Endothelial cell of umbilical vein (primary cell): ENCODE measurements at regions of chr1 and their contacts with region 1.

Region 1: DNA sequence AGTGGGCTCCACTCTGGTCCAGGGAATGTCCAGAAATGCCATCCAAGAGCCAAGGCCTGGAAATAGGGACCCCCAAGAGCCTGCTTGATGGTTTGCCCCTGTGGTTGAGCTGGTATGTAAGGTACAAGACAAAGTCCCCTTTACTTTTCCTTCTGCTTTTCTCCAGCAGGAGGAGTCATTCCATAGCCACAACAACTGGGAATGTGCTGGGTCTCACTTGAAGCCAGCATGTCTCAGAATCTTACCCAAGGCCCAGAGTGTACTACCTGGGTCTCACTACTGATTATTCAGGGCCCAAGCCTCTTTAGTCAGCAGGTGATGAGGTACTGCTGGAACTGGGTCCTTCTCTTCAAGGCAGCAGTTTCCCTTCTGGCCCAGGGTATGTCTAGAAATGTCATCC is 62.1 kb upstream of the CD55 start:
- DNase-seq: peak; percentile 78
- H3K4me3 ChIP-seq: no peak overlapping the region
- H3K27ac ChIP-seq: no peak overlapping the region
- H3K4me1 ChIP-seq: no peaks in the 10 kb centered on the region
- H3K27me3 ChIP-seq: no peaks in the 10 kb centered on the region
- CTCF ChIP-seq: peak; percentile 46 to 67
- POLR2A ChIP-seq: no peak

Region 2: GRCh38 chr1:207084701-207085180 is 174.7 kb before region 1 on chr1:
- CTCF ChIA-PET with region 1: interaction called, 13 read pairs
- POLR2A ChIA-PET with region 1: no interaction called
- dilution Hi-C with region 1: no loop called
- intact Hi-C with region 1: loop called (anchors 1 kb)
- DNase-seq: peak; percentile 75
- H3K4me3 ChIP-seq: no peak overlapping the region
- H3K27ac ChIP-seq: no peak overlapping the region
- H3K4me1 ChIP-seq: no peaks in the 10 kb centered on the region
- H3K27me3 ChIP-seq: peaks cover 2 to 3% of the 10 kb centered on the region in 2 experiments
- CTCF ChIP-seq: peak; percentile 39 to 63
- POLR2A ChIP-seq: no peak

Region 3: DNA sequence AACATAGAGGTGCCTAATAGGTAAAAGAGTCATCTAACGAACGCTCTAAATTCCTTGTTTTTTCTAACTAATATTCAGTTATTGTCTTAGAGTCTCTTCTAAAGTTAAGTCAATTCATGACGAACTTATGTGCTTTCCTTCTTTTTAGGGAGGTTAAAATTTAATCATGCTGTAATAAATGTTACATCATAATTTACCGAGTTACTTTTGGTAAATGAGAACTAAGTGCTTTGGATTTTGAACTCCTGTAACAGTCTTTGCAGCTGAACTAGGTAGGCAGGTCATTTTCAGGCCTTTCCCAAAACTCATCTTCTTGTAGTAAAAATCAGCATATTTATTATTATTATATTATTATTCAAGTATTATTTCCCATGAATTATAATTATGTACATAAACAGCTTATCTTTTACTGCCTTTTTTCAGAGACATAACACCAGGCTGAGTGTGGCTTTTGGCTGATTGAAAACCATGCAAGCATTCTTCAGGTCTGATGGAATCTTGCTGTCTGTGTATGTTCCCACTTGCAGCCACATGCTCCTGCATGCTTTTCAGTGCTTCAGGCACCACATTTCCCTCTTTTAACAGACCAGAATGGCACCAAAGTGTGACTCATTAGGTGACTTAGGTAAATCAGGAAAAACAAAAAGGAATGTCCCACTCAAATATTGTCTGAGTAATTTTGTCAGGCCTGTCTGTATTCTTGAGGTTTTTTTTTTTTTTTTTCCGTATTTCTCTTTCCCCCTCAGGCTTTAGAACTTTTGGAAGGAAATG is 18.9 kb before region 1 on chr1:
- CTCF ChIA-PET with region 1: interaction called, 3 read pairs
- POLR2A ChIA-PET with region 1: no interaction called
- dilution Hi-C with region 1: no loop called
- intact Hi-C with region 1: loop called (anchors 1 kb)
- DNase-seq: peak; percentile 59
- H3K4me3 ChIP-seq: no peak overlapping the region
- H3K27ac ChIP-seq: no peak overlapping the region
- H3K4me1 ChIP-seq: peaks cover 18% of the 10 kb centered on the region
- H3K27me3 ChIP-seq: no peaks in the 10 kb centered on the region
- CTCF ChIP-seq: no peak
- POLR2A ChIP-seq: no peak

Region 4: DNA sequence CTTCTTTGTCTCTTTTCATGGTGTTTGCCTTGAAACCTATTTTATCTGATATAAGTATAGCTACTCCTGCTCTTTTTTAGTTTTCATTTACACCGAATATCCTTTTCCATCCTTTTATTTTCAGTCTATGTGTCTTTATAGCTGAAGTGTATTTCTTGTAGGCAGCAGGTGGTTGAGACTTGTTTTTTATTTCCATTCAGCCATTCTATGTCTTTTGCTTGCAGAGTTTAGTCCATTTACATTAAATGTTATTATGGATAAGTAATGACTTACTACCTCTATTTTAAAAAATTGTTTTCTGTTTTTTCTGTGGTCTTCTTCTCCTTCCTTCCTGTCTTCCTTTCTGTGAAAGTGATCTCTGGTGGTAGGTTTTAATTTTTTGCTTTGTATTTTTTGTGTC is 17.1 kb after region 1 on chr1:
- CTCF ChIA-PET with region 1: no interaction called
- POLR2A ChIA-PET with region 1: no interaction called
- dilution Hi-C with region 1: no loop called
- intact Hi-C with region 1: no loop called
- DNase-seq: no peak
- H3K4me3 ChIP-seq: no peak overlapping the region
- H3K27ac ChIP-seq: no peak overlapping the region
- H3K4me1 ChIP-seq: peaks cover 7% of the 10 kb centered on the region
- H3K27me3 ChIP-seq: no peaks in the 10 kb centered on the region
- CTCF ChIP-seq: no peak
- POLR2A ChIP-seq: no peak

Region 5: DNA sequence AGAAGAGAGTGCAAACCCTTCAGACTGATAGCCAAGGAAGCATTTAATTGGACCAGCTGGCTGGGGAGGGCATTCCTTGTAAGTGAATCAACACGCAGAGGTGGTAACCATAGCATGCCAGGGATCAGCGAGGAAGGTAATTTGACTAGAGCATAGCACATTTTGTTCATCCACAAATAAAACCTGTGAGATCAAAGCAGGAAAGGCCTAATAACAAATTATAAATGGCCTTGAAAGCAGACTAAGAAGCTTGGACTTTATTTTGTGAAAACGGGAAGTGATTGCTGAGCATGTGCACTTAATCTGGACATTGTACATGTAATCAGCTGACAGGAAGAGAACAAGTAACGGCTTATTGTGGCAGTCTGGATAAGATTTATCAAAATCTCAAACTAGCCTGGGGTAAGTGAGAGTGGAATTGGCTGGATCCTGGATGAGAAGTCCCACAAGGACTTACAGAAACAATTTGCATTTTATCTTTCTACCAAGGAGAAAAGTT is 50.4 kb after region 1 on chr1:
- CTCF ChIA-PET with region 1: interaction called, 6 read pairs
- POLR2A ChIA-PET with region 1: no interaction called
- dilution Hi-C with region 1: no loop called
- intact Hi-C with region 1: loop called (anchors 1 kb)
- DNase-seq: peak; percentile 89
- H3K4me3 ChIP-seq: peak overlapping the region in 1 of 3 experiments; percentile 23
- H3K27ac ChIP-seq: peak overlapping the region; percentile 69
- H3K4me1 ChIP-seq: peaks cover 37% of the 10 kb centered on the region
- H3K27me3 ChIP-seq: no peaks in the 10 kb centered on the region
- CTCF ChIP-seq: no peak
- POLR2A ChIP-seq: no peak